Sciatic nerve (tissue), 2 donors: ENCODE measurements at regions of chr22 and their contacts with region 1.

Region 1: GRCh38 chr22:36365020-36365411 is 22.8 kb downstream of the MYH9 start:
- DNase-seq: no peak
- ATAC-seq: peak; percentile 63

Region 2: GRCh38 chr22:35950262-35950661 is 414.8 kb before region 1 on chr22:
- intact Hi-C with region 1: no loop called
- DNase-seq: no peak
- ATAC-seq: no peak

Region 3: GRCh38 chr22:36311386-36312358 is 53.3 kb before region 1 on chr22:
- intact Hi-C with region 1: loop called (anchors 10 kb)
- DNase-seq: no peak
- ATAC-seq: no peak

Region 4: GRCh38 chr22:36325154-36326031 is 39.6 kb before region 1 on chr22:
- intact Hi-C with region 1: no loop called
- DNase-seq: no peak
- ATAC-seq: peak; percentile 67

Region 5: GRCh38 chr22:36454916-36455570 is 90.0 kb after region 1 on chr22:
- intact Hi-C with region 1: no loop called
- DNase-seq: peak; percentile 93
- ATAC-seq: peak; percentile 88